ENCODE measurements at regions of chr10 and their contacts with region 1.

Region 1: GRCh38 chr10:75235375-75236177 is at the start of gene COMTD1:
- DNase-seq: peak; percentile 97
- ATAC-seq: peak; percentile 69
- H3K4me3 Mint-ChIP-seq: peak within 1 kb of the TSS; percentile 81
- H3K27ac Mint-ChIP-seq: peak within 1 kb of the TSS; percentile 92
- H3K4me1 Mint-ChIP-seq: peaks cover 25% of the 10 kb centered on the region
- H3K27me3 Mint-ChIP-seq: no peaks in the 10 kb centered on the region
- total RNA-seq, gene COMTD1: 39.8 to 43.2 TPM

Region 2: DNA sequence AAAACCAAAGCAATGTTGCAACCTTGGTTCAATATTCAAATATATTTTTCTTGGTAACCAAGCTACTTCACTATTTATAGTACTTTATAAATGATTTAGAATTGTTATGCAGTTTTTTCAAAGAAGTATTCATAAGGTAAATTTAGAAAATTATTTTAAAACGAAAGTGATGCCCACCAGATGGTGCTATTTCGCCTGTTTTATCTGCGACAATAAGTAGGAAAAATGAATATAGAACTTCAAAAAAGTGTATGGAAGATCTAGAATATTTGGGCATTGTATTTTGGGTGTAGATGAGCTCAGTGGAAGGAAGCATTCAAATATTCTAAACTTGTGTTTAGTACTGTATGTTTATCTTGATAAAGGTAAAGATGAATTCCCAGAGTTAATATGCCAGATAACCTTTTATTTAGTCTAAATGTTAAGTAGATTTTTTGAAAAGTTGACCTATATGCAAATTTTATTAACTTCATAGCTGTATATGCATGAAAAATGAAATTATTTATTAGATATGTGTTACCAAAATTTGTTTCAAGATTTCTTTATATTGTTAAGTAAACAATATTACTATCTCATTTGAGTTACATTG is 991.4 kb before region 1 on chr10:
- CTCF ChIA-PET with region 1: interaction called, 12 read pairs
- DNase-seq: no peak
- ATAC-seq: no peak
- H3K4me3 Mint-ChIP-seq: no peak overlapping the region
- H3K27ac Mint-ChIP-seq: no peak overlapping the region
- H3K4me1 Mint-ChIP-seq: no peaks in the 10 kb centered on the region
- H3K27me3 Mint-ChIP-seq: no peaks in the 10 kb centered on the region

Region 3: DNA sequence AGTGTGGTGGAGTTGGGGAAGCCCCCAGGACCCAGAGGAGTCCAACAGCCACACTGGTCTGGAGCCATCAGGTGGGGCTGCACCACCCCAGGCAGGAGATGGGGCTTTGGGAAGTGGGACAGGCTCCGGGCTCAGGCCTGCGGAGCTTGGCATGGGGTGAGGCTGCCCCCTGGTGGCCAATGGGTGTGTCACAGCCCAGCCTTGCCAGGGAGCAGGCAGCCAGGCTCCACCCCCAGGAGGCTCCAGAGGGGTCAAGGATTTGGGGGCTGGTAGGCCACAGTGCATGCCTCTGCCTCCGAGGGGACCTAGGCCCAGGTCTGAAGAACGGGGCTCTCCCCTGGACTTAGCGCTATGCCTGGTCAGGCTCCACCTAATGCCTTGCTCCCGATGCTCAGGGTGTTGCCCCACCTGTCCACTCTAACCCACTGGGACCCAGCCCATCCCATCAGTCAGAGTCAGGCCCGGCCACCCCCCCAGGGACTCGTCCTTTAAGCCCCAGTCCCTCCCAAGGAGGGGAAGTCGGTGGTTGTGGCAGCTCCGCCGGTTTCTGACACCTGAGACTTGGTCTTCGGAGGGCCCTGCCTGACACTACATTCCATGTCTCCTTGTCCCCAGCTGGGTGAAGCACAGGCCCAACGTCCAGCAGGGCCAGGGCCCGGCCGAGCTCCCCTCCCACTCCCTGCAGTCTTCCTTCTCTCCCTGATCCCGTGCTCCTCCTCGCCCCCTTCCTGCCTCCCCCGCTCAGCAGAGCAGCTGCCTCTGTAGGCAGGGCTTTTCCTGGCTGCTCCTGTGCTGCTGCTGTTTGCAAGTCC is 135.4 kb before region 1 on chr10:
- CTCF ChIA-PET with region 1: interaction called, 11 read pairs
- DNase-seq: peak; percentile 86
- ATAC-seq: peak; percentile 97
- H3K4me3 Mint-ChIP-seq: no peak overlapping the region
- H3K27ac Mint-ChIP-seq: no peak overlapping the region
- H3K4me1 Mint-ChIP-seq: peaks cover 2% of the 10 kb centered on the region
- H3K27me3 Mint-ChIP-seq: no peaks in the 10 kb centered on the region

Region 4: DNA sequence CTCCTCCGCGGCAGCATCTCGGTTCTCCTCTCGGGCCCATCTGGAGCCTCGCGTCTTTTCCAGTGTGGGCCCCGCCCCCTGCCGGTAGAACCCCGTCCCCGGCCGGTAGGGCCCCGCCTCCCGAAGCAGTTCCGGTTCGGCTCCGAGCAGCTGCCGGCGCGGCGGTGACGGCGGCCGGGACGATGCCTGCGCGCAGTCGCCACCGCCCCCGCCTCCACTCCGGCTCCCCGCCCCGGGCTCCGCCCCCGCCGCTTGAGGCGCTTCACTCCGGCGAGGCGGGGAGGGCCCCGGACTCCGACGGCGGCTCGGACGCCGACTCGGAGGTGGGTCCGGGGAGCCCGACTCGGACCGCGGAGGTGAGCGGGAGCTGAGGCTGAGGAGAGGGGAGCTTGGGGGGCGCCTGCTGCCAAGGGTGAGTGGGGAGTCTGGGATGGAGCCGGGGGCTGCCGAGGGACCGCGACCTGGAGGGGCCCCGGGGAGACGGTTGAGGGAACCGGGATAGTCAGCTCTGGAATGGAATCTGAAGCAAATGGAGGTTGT is 124.1 kb before region 1 on chr10 and contains the start of gene SAMD8:
- CTCF ChIA-PET with region 1: interaction called, 34 read pairs
- DNase-seq: peak; percentile 98
- ATAC-seq: peak; percentile 89
- H3K4me3 Mint-ChIP-seq: peak within 1 kb of the TSS; percentile 84
- H3K27ac Mint-ChIP-seq: peak within 1 kb of the TSS; percentile 87
- H3K4me1 Mint-ChIP-seq: peaks cover 48% of the 10 kb centered on the region
- H3K27me3 Mint-ChIP-seq: no peaks in the 10 kb centered on the region
- total RNA-seq, gene SAMD8: 13.8 TPM

Region 5: DNA sequence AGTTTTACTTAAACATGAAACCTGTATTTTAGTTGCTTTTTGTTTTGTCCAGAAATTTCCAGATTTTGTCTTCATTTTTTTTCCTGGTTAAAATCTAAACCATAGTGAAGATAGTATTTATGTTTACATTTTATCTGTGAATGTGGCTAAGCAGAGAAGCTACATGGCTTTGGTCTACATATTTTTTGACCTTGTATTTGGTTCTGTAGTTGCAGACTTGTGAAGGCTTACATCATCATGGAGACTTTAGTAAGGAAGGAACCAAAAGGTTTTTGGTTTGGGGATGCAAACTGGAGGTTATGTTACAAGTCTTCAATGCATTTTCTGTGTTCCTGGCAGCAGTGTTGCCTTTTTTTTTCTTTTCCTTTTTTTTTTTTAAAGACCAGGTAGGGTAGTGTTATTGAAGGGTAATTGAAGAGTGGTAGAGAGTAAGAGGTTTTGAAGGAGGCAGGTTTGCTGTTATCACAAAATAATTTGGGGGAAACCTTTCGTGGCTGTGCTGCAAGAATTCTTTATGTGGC is 55.9 kb before region 1 on chr10:
- CTCF ChIA-PET with region 1: interaction called, 126 read pairs
- DNase-seq: no peak
- ATAC-seq: no peak
- H3K4me3 Mint-ChIP-seq: no peak overlapping the region
- H3K27ac Mint-ChIP-seq: peak overlapping the region; percentile 59
- H3K4me1 Mint-ChIP-seq: peaks cover 33% of the 10 kb centered on the region
- H3K27me3 Mint-ChIP-seq: no peaks in the 10 kb centered on the region

Region 6: GRCh38 chr10:75187961-75188426 is 47.6 kb before region 1 on chr10:
- CTCF ChIA-PET with region 1: interaction called, 126 read pairs
- DNase-seq: peak; percentile 82
- ATAC-seq: peak; percentile 90
- H3K4me3 Mint-ChIP-seq: no peak overlapping the region
- H3K27ac Mint-ChIP-seq: peak overlapping the region; percentile 67
- H3K4me1 Mint-ChIP-seq: peaks cover 13% of the 10 kb centered on the region
- H3K27me3 Mint-ChIP-seq: no peaks in the 10 kb centered on the region

Region 7: GRCh38 chr10:75210282-75211006 is 25.1 kb before region 1 on chr10 and contains the start of gene VDAC2:
- CTCF ChIA-PET with region 1: interaction called, 70 read pairs
- DNase-seq: peak; percentile 94
- ATAC-seq: peak; percentile 92
- H3K4me3 Mint-ChIP-seq: peak within 1 kb of the TSS; percentile 97
- H3K27ac Mint-ChIP-seq: peak within 1 kb of the TSS; percentile 100
- H3K4me1 Mint-ChIP-seq: peaks cover 44% of the 10 kb centered on the region
- H3K27me3 Mint-ChIP-seq: no peaks in the 10 kb centered on the region
- total RNA-seq, gene VDAC2: 136 to 156 TPM

Region 8: GRCh38 chr10:75272896-75273295 is 37.3 kb after region 1 on chr10:
- CTCF ChIA-PET with region 1: no interaction called
- DNase-seq: no peak
- ATAC-seq: no peak
- H3K4me3 Mint-ChIP-seq: no peak overlapping the region
- H3K27ac Mint-ChIP-seq: no peak overlapping the region
- H3K4me1 Mint-ChIP-seq: no peaks in the 10 kb centered on the region
- H3K27me3 Mint-ChIP-seq: no peaks in the 10 kb centered on the region

Measured in activated CD8-positive, alpha-beta memory T cell treated with anti-CD3 and anti-CD28 coated beads, Interleukin-2, amount 10 ng/mL, durations not matched to agents 7 days and 5 days (primary cell).